Left cardiac atrium (tissue), 4 donors: ENCODE measurements at regions of chr5 and their contacts with region 1.

Region 1: DNA sequence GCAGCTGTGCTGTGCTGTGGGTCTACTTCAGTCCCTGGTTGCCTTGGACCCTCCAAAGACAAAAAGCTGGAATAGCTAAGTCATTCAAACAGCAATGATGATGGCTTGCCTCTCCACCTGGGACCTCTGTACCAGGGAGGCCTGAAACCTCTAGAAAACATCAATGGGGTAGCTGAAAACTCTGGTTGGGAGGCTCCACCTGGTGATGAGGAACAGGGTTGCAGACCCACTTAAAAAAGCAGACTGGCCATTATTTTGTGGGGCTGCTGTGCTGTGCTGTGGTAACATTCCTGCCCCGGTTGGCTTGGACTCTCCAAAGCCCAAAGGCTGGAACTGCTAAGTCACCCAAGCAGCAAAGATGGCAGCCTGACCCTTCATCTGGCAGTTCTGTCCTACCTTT is 839.3 kb upstream of the ARRDC3 start:
- DNase-seq: no peak
- ATAC-seq: no peak

Region 2: DNA sequence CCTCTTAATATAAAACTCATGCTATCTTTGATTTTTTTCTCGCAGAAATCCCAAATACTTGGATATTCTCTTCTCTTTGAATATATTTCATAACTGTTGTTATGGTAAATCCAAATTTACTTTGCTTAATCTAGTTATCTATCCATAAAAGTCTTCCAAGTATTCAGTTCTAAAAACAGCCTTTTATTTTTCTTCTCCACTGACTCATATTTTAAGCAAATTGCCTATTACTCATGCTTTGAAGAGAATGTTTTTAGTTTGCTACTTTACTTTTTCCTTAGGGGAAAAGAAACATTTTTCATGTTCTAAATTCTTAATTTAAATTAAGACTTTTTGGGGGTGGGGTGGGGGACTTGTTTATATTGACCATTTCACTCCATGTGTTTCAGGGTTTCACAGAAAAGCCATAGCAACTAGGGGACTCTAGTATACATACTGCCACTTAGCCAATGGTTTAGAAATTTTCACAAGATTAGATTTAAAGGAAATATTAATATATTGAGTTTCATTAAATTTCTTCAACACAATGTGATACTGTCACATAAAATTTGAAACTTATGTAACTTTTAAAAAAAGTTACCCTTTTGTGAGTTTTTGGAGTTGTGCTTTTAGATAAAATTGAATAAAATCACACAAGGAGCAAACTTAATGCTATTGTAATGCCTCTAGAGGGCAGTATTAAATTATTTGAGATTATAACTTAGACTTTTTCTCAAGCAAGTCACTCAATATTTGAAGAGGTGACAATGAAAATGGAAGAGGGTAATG is 293.5 kb before region 1 on chr5:
- intact Hi-C with region 1: loop called in 1 of 2 experiments (anchors 10 kb)
- DNase-seq: no peak
- ATAC-seq: no peak

Region 3: DNA sequence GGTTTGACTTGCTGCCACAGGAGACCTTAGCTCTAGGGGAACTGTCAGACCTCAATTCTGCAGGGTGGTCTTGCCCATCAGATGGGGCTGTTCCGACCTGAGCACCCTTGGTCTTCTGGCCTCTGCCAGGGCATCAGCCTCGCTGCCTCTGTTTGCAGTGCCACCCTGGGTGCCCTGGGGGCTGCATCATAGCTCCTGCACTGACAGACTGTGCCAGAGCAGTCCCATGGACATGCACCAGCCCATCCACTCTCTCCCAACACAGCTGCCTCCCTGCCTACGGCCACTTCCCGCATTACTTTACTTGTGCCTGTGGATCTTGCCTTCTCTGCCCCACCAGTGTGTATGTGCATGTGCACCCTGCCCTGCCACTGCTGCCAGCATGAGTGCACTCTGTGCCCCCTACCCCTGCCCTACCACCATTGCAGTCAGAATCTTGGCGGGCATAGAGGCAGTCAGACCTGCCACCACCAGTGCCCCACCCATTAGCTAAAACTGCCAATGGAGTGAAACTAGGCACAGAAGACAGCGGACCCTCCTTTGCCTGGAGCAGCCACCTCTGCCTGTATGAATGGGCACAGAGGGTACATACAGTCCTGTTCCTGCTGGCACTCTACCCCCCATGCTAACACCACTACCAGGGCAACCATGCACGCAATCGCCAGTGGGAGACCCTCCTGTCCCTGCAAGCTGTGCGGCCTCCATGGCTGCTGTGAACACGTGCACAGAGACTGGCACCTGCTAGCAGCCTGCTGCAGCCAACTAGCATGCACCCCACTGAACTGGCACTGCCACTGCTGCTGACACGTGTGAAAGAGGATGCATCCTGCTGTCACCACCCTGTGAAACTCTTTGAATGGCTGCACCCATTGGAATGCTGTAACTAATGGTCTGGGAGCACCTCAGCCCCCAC is 45.6 kb after region 1 on chr5:
- intact Hi-C with region 1: no loop called
- DNase-seq: no peak
- ATAC-seq: no peak

Region 4: DNA sequence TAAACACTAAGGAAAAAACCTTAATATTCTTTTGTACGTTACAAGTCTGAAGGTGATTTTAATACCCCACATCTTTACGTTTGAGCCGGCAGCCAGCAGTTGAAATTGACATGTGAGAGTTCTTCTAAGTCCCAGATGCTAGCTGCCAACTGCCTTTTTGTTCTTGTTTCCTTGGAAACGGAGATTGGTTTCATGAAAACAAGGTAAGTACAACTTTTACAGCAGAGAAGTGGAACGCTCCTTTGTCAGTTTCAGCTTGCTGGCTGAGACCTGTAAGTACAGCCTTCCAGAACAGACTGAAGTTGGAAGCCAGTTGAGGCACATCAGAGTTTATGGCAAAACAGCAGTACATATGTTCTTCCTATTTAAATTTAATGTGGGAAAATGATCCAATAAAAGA is 179.0 kb after region 1 on chr5:
- intact Hi-C with region 1: no loop called
- DNase-seq: no peak
- ATAC-seq: no peak